ENCODE measurements at regions of chr11 and their contacts with region 1.

Region 1: GRCh38 chr11:45655347-45655756 is 10.1 kb downstream of the CHST1 start:
- DNase-seq: peak; percentile 93
- ATAC-seq: peak; percentile 73
- H3K4me3 Mint-ChIP-seq: no peak overlapping the region; the same call in 1 of the 2 replicates
- H3K27ac Mint-ChIP-seq: no peak overlapping the region; the same call in 1 of the 2 replicates
- H3K4me1 Mint-ChIP-seq: peaks cover 31% of the 10 kb centered on the region
- H3K27me3 Mint-ChIP-seq: no peaks in the 10 kb centered on the region; the same call in 1 of the 2 replicates
- CTCF ChIP-seq: peak; percentile 89

Region 2: GRCh38 chr11:45354976-45355705 is 300.2 kb before region 1 on chr11:
- CTCF ChIA-PET with region 1: interaction called, 12 read pairs
- POLR2A ChIA-PET with region 1: no interaction called
- DNase-seq: peak; percentile 86
- ATAC-seq: peak; percentile 92
- H3K4me3 Mint-ChIP-seq: peak overlapping the region; percentile 71
- H3K27ac Mint-ChIP-seq: peak overlapping the region; percentile 59
- H3K4me1 Mint-ChIP-seq: peaks cover 46% of the 10 kb centered on the region
- H3K27me3 Mint-ChIP-seq: peaks cover 9% of the 10 kb centered on the region; the same call in 1 of the 2 replicates
- CTCF ChIP-seq: no peak

Region 3: DNA sequence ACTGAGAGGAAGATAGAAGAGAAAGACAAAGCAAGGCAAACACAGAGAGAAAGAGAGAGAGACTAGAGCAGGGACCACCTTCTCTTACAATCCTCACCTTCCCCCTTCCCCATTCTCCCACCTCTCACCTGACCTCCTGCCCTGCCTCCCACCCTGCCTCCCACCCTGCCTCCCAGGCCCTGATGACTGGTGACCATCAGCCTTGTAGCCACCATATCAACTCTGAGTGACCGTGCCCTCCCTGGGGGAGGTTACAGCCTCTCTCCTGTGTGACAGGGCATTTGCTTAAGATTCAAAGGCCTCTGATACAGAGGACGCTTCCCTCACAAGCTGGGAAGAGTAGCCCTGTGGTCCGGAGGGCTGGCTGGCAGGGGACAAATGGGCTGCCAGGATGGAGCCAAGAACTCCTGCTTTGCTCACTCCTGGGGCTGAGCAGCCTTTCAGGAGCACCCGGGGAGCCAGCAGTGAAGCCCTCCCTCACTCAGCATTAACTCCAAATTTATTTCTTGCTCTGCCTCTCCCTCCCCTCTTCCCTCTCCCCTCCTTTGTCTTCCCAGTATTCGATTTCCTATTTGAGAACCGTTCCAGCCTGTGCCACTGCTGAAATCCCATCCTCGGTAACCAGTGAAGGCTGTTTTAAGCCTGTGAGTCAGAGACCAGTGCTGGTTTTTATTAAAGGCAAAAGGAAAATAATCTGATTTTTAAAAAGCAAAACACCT is 244.0 kb before region 1 on chr11:
- CTCF ChIA-PET with region 1: interaction called, 10 read pairs
- POLR2A ChIA-PET with region 1: no interaction called
- DNase-seq: no peak
- ATAC-seq: peak; percentile 17
- H3K4me3 Mint-ChIP-seq: peak overlapping the region; percentile 57
- H3K27ac Mint-ChIP-seq: peak overlapping the region; percentile 88
- H3K4me1 Mint-ChIP-seq: peaks cover 52% of the 10 kb centered on the region
- H3K27me3 Mint-ChIP-seq: peaks cover 6% of the 10 kb centered on the region; the same call in 1 of the 2 replicates
- CTCF ChIP-seq: no peak

Region 4: GRCh38 chr11:45543808-45544422 is 111.4 kb before region 1 on chr11:
- CTCF ChIA-PET with region 1: interaction called, 11 read pairs
- POLR2A ChIA-PET with region 1: no interaction called
- DNase-seq: peak; percentile 69
- ATAC-seq: peak; percentile 51; the same call in 1 of the 2 replicates
- H3K4me3 Mint-ChIP-seq: no peak overlapping the region
- H3K27ac Mint-ChIP-seq: no peak overlapping the region
- H3K4me1 Mint-ChIP-seq: no peaks in the 10 kb centered on the region
- H3K27me3 Mint-ChIP-seq: peaks cover 11% of the 10 kb centered on the region
- CTCF ChIP-seq: no peak

Region 5: DNA sequence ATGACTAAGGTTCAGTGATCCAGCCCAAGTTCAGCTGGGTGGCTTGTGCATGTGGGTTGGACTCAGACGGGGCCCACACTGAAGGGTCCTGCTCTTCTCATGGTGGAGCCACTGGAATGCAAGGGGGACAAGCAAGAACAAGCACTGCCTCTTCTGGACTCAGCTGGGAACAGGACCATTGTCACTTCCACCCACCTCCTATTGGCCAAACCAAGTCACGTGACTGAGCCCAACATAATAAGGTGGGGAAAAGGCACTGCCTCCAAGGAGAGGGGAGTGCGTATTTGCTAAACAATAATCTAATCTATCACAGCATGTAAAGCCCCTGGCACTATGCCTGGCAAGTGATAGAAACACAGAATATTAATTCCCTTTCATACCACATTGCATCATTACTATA is 77.0 kb before region 1 on chr11:
- CTCF ChIA-PET with region 1: interaction called, 20 read pairs
- POLR2A ChIA-PET with region 1: no interaction called
- DNase-seq: no peak
- ATAC-seq: no peak; the same call in 1 of the 2 replicates
- H3K4me3 Mint-ChIP-seq: no peak overlapping the region
- H3K27ac Mint-ChIP-seq: no peak overlapping the region
- H3K4me1 Mint-ChIP-seq: peaks cover 17% of the 10 kb centered on the region
- H3K27me3 Mint-ChIP-seq: peaks cover 5% of the 10 kb centered on the region
- CTCF ChIP-seq: no peak

Region 6: DNA sequence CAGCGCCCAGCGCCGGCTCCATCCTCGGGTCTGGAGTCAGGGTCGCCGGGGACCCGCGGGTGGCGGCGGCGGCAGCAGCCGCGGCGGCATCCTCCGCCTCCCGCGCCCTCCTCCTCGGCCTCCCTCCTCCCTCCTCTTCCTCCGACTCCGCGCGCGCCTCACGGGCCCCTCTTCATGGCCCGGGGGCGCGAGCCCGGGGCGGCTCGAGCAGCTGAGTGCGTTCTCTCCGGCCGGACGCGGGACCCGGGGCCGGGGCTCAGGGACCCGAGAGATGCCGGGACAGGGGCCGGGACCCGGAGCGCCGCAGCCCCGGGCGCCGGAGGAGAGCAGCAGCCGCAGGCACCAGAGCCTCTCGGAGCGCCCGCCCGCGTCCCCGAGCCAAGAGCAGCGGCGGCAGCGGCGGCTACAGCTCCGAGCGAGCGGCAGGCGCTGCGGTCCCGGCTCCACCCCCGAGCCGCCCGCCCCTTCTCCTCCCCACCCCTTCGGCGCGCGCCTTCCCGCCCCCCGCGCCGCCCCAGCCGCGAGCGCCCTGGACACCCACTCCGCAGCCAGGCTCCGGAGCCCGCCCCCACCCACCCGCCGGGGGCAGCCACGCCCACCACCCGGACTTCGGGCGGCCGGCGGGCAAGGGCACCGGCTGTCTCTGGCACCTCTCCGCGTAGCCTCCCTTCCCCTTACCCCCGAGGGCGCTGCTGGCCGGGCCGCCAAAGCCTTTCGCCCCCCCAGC is 10.0 kb after region 1 on chr11 and contains the start of gene CHST1:
- CTCF ChIA-PET with region 1: interaction called, 28 read pairs
- POLR2A ChIA-PET with region 1: interaction called, 3 read pairs
- DNase-seq: peak; percentile 43
- ATAC-seq: peak; percentile 25
- H3K4me3 Mint-ChIP-seq: peak within 1 kb of the TSS; percentile 70
- H3K27ac Mint-ChIP-seq: no peak within 1 kb of the TSS
- H3K4me1 Mint-ChIP-seq: peaks cover 32% of the 10 kb centered on the region
- H3K27me3 Mint-ChIP-seq: peaks cover 57% of the 10 kb centered on the region
- CTCF ChIP-seq: no peak
- total RNA-seq, gene CHST1: 2.4 to 2.6 TPM (median 2.4 TPM) in 3 replicates

Region 7: DNA sequence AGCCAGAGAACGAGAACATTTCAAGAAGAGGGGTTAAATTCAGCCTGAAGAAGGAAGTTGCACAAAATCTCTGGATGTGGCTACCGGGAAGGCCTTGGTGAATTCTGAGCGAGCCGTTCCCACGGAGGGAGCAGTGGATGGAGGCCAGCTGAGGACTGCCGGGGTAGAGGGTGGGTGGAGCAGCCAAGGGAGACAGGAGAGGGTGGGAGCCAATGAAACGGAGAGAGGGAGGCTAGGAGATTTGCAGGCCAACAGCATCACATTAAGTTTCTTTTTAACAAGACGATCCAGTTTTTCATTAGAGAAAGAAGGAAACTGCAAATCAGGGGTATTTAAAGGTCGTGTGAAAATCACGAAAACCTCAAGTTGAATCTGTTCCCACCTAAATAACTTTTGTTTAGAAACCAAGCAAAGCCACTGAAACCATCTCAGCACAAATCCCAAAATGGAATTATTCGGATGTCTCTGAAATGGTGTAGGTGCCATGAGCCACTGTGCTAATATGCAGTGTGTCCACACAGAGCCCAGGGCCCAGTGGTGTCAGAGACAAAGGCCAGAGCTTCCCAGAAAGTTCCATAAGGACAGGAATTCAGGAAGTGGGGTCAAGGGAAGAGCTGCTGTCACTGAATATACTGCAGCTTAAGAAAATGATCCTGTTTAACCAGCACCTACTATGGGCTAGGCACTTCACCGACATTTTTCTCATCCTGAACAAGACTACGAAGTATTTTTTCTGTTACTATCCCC is 89.9 kb after region 1 on chr11:
- CTCF ChIA-PET with region 1: interaction called, 10 read pairs
- POLR2A ChIA-PET with region 1: no interaction called
- DNase-seq: no peak
- ATAC-seq: peak; percentile 81
- H3K4me3 Mint-ChIP-seq: no peak overlapping the region
- H3K27ac Mint-ChIP-seq: peak overlapping the region; percentile 23; the same call in 1 of the 2 replicates
- H3K4me1 Mint-ChIP-seq: peaks cover 19% of the 10 kb centered on the region
- H3K27me3 Mint-ChIP-seq: no peaks in the 10 kb centered on the region; the same call in 1 of the 2 replicates
- CTCF ChIP-seq: no peak

Measured in WTC11 (cell line).